H1 (cell line): ENCODE measurements at regions of chr17 and their contacts with region 1.

Region 1: DNA sequence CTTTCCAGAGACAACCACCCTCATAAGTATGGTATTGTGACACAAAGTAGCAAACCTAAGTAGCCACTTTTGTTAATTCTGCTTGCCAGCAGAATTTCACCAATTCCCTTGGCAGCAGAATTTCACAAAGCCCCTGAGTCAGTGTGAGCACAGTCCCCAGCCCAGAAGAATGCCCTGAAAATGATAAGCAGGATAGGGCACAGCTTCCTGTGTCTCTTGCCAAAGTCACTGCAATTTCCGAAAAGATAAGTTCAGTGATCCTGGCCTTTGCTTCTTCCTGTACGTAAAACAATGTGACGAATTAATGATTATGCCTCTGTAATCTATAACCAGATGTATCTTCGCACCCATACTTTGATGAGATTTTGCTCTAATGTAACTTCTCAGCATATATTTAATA is 16.0 kb upstream of the WIPF2 start:
- DNase-seq: no peak
- H3K4me3 ChIP-seq: no peak overlapping the region
- H3K27ac ChIP-seq: no peak overlapping the region
- H3K4me1 ChIP-seq: no peaks in the 10 kb centered on the region
- H3K27me3 ChIP-seq: no peaks in the 10 kb centered on the region
- CTCF ChIP-seq: no peak
- EP300 ChIP-seq: no peak
- POLR2A ChIP-seq: no peak
- RAD21 ChIP-seq: no peak

Region 2: GRCh38 chr17:39915559-39915958 is 287.6 kb before region 1 on chr17:
- CTCF ChIA-PET with region 1: no interaction called
- POLR2A ChIA-PET with region 1: no interaction called
- DNase-seq: no peak
- H3K4me3 ChIP-seq: no peak overlapping the region
- H3K27ac ChIP-seq: no peak overlapping the region
- H3K4me1 ChIP-seq: no peaks in the 10 kb centered on the region
- H3K27me3 ChIP-seq: no peaks in the 10 kb centered on the region
- CTCF ChIP-seq: no peak
- EP300 ChIP-seq: no peak
- POLR2A ChIP-seq: no peak
- RAD21 ChIP-seq: no peak

Region 3: GRCh38 chr17:39952680-39953470 is 250.3 kb before region 1 on chr17:
- CTCF ChIA-PET with region 1: no interaction called
- POLR2A ChIA-PET with region 1: no interaction called
- DNase-seq: peak; percentile 97 to 100
- H3K4me3 ChIP-seq: peak overlapping the region; percentile 33 to 66 (median 49); a peak in 7 of 8 replicates
- H3K27ac ChIP-seq: no peak overlapping the region
- H3K4me1 ChIP-seq: peaks cover 0 to 13% (median 7%) of the 10 kb centered on the region in 4 experiments; a peak in 6 of 7 replicates
- H3K27me3 ChIP-seq: peaks cover 0 to 5% (median 2%) of the 10 kb centered on the region in 4 experiments; a peak in 3 of 7 replicates
- CTCF ChIP-seq: no peak
- EP300 ChIP-seq: no peak
- POLR2A ChIP-seq: no peak; a peak in 1 of 3 replicates
- RAD21 ChIP-seq: no peak

Region 4: DNA sequence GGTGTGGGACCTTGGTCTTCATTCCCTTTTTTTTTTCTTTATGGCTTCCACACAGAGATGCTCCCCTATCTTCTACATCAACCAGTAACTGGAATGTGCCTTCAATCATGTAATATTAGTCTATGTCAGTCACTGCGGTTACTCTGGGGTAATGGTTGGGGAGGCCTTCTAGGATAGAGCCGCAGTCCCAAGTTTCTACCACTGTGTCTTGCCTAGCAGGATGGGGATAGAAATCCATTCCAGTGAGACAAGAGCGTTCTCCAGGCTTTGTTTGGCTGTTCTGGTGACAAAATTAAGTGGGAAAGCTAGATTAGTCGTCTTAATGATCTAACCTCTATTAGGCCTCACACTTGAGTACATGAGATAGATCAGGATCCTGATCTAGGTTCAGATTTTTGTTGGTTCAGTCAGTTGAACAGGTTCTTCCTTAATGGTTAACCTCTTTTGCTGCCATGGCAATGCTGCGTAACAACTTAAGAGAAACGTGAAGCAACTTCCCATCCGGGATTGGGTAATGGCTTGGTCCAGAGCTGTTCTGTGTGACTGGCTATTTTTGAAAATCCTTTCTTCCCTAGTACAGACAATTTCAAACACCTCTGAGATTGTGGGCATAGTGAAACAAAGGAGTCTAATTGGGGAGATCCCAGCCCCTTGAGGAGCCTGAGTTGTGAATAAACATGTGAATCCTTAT is 72.6 kb before region 1 on chr17:
- CTCF ChIA-PET with region 1: no interaction called
- POLR2A ChIA-PET with region 1: no interaction called
- DNase-seq: no peak
- H3K4me3 ChIP-seq: no peak overlapping the region
- H3K27ac ChIP-seq: no peak overlapping the region
- H3K4me1 ChIP-seq: no peaks in the 10 kb centered on the region
- H3K27me3 ChIP-seq: no peaks in the 10 kb centered on the region
- CTCF ChIP-seq: no peak
- EP300 ChIP-seq: no peak
- POLR2A ChIP-seq: no peak
- RAD21 ChIP-seq: no peak

Region 5: GRCh38 chr17:40157973-40158372 is 45.2 kb before region 1 on chr17:
- CTCF ChIA-PET with region 1: no interaction called
- POLR2A ChIA-PET with region 1: no interaction called
- DNase-seq: no peak
- H3K4me3 ChIP-seq: no peak overlapping the region
- H3K27ac ChIP-seq: no peak overlapping the region
- H3K4me1 ChIP-seq: no peaks in the 10 kb centered on the region
- H3K27me3 ChIP-seq: no peaks in the 10 kb centered on the region
- CTCF ChIP-seq: no peak
- EP300 ChIP-seq: no peak
- POLR2A ChIP-seq: no peak
- RAD21 ChIP-seq: no peak

Region 6: GRCh38 chr17:40191237-40192208 is 11.6 kb before region 1 on chr17:
- CTCF ChIA-PET with region 1: interaction called, 61 read pairs
- POLR2A ChIA-PET with region 1: interaction called, 4 read pairs
- DNase-seq: peak; percentile 70 to 87
- H3K4me3 ChIP-seq: peak overlapping the region; percentile 20 to 73 (median 44)
- H3K27ac ChIP-seq: no peak overlapping the region
- H3K4me1 ChIP-seq: peaks cover 0 to 15% (median 8%) of the 10 kb centered on the region in 4 experiments; a peak in 5 of 7 replicates
- H3K27me3 ChIP-seq: no peaks in the 10 kb centered on the region
- CTCF ChIP-seq: peak; percentile 58 to 73 (median 71)
- EP300 ChIP-seq: no peak
- POLR2A ChIP-seq: no peak
- RAD21 ChIP-seq: peak; percentile 32 to 60